Activated naive CD4-positive, alpha-beta T cell treated with anti-CD3 and anti-CD28 coated beads for 36 hours (primary cell): ENCODE measurements at regions of chr3 and their contacts with region 1.

Region 1: GRCh38 chr3:183317886-183318865 is 65.1 kb downstream of the B3GNT5 start:
- DNase-seq: no peak
- H3K4me3 Mint-ChIP-seq: no peak overlapping the region
- H3K27ac Mint-ChIP-seq: no peak overlapping the region
- H3K4me1 Mint-ChIP-seq: peaks cover 16% of the 10 kb centered on the region
- H3K27me3 Mint-ChIP-seq: peaks cover 3% of the 10 kb centered on the region

Region 2: DNA sequence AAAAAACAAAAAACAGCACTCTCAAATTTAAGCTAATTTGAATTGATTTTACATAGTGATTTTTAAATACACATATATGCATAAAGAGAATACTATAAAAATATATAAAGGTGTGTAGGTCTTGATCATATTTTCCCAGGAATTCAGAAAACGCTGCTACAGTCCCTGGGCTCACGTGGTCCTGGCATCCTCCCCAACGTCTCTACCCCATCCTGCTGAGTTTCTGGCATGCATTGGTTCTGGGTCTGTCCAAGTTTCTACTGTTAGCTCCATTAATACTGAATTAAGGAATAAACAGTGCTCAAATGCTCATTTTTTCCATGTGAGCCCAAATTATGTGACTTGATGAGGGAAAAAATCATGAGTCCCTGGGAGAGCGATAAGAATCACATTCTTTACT is 122.9 kb before region 1 on chr3:
- CTCF ChIA-PET with region 1: no interaction called
- intact Hi-C with region 1: no loop called
- DNase-seq: no peak
- H3K4me3 Mint-ChIP-seq: no peak overlapping the region
- H3K27ac Mint-ChIP-seq: no peak overlapping the region
- H3K4me1 Mint-ChIP-seq: peaks cover 8% of the 10 kb centered on the region
- H3K27me3 Mint-ChIP-seq: no peaks in the 10 kb centered on the region

Region 3: GRCh38 chr3:183210839-183211341 is 107.3 kb before region 1 on chr3:
- CTCF ChIA-PET with region 1: no interaction called
- intact Hi-C with region 1: no loop called
- DNase-seq: peak; percentile 73
- H3K4me3 Mint-ChIP-seq: no peak overlapping the region
- H3K27ac Mint-ChIP-seq: peak overlapping the region; percentile 85
- H3K4me1 Mint-ChIP-seq: peaks cover 63% of the 10 kb centered on the region
- H3K27me3 Mint-ChIP-seq: no peaks in the 10 kb centered on the region

Region 4: GRCh38 chr3:183306798-183307671 is 11.1 kb before region 1 on chr3:
- CTCF ChIA-PET with region 1: interaction called, 5 read pairs
- intact Hi-C with region 1: loop called (anchors 1 kb)
- DNase-seq: peak; percentile 71
- H3K4me3 Mint-ChIP-seq: peak overlapping the region; percentile 19
- H3K27ac Mint-ChIP-seq: peak overlapping the region; percentile 48
- H3K4me1 Mint-ChIP-seq: peaks cover 20% of the 10 kb centered on the region
- H3K27me3 Mint-ChIP-seq: no peaks in the 10 kb centered on the region

Region 5: DNA sequence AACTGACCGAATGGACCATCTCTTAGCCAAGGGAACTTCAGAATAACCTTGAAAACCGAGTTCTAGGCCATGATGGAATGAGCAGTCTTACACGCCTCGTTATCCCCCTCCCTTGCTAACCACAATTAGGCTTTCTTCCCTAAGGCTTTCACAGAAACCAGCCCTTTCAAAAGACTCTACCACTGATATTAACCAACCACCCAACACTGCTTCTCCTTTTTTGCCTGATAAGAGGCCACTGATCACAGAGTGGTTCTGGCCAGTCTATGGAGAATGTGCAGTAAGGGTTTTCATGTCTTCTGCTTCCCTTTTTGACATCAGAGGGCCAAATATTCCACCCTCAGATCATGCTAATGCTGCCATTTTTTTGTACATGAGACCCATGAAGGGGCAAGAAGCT is 50.9 kb after region 1 on chr3:
- CTCF ChIA-PET with region 1: no interaction called
- intact Hi-C with region 1: loop called (anchors 2 kb)
- DNase-seq: no peak
- H3K4me3 Mint-ChIP-seq: no peak overlapping the region
- H3K27ac Mint-ChIP-seq: no peak overlapping the region
- H3K4me1 Mint-ChIP-seq: peaks cover 36% of the 10 kb centered on the region
- H3K27me3 Mint-ChIP-seq: no peaks in the 10 kb centered on the region